ENCODE measurements at regions of chr17 and their contacts with region 1.

Region 1: DNA sequence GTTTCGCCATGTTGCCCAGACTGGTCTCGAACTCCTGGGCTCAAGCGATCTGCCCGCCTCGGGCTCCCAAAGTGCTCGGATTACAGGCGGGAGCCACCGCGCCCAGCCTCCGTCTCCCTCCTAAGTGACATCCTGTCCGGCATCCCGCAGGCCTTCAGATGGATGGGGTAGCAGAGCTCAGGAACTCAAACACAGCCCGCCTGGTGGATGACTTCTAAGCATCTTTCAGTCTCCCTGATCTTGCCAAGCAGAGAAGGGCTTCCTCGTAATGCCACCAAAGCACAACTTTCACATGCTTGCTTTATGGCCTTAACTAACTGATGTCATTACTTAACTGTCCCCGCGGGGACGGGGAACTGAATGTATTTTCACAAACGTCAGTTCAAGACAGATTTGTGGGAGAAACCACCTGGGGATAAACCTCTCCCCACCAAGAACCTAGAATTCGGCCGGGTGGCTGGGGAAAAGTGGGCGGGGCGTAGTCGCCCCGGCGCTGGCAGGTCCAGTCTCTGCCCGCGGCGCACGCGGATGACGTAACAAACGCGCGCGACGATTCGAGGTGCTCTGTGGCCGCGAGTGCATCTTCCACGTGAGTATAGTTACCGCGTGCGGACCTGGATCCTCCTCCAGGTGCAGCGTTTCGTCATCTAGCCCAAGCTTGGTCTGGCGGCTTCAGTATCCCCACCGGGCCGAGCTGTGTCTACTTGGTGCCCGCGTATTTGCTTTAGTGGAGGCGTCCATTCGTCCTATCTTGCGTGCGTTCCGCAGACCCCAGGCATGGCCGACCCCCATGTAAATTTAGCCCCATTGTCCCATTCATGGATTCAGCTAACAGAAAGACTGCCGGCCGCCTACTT is at the start of gene PFAS:
- DNase-seq: peak; percentile 97
- ATAC-seq: peak; percentile 71
- H3K4me3 Mint-ChIP-seq: peak within 1 kb of the TSS; percentile 96
- H3K27ac Mint-ChIP-seq: peak within 1 kb of the TSS; percentile 99
- H3K4me1 Mint-ChIP-seq: peaks cover 39% of the 10 kb centered on the region
- H3K27me3 Mint-ChIP-seq: no peaks in the 10 kb centered on the region
- total RNA-seq, gene PFAS: 78.3 to 80.2 TPM

Region 2: GRCh38 chr17:8138672-8139371 is 110.2 kb before region 1 on chr17:
- CTCF ChIA-PET with region 1: interaction called, 4 read pairs
- POLR2A ChIA-PET with region 1: interaction called, 16 read pairs
- DNase-seq: peak; percentile 98
- ATAC-seq: peak; percentile 93
- H3K4me3 Mint-ChIP-seq: no peak overlapping the region
- H3K27ac Mint-ChIP-seq: no peak overlapping the region
- H3K4me1 Mint-ChIP-seq: peaks cover 5% of the 10 kb centered on the region
- H3K27me3 Mint-ChIP-seq: peaks cover 4% of the 10 kb centered on the region

Region 3: DNA sequence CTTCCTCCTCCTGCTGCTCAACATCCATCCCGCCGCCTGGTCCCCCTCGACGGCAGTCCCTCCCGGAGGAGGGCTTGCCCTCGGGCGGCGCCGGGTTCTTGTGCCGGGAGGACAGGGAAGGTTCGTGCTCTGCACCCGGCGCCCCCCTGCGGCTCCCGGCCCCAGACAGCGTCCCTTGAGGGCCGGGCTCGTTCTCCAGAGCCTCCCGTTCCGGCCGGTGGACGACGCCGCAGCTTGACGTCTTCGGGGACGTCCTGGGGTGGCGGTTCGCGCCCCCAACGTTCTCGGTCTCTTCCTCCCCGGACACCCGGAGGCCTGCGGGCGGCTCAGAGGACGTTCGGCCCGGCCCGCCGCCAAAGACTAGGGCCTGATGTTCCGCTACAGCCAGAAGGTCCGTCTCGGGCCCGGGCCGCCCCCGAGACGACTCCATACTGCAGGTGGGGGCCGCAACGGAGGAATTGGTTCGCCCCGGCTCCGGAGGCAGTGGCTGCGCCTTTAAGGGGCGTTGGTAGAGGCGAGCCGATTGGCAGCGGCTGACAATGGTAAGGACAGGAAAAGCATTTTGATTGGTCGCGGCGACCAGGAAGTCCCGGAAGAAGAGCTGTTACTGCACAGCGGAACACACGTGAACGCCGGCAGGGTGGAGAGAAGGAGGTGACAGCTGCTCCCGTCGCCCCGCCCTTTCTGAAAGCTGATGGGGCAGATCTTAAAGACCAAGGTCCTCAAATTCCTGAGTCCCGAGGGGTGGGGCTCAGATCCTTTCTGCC is 59.1 kb before region 1 on chr17 and contains the start of gene BORCS6:
- CTCF ChIA-PET with region 1: interaction called, 11 read pairs
- POLR2A ChIA-PET with region 1: interaction called, 26 read pairs
- DNase-seq: peak; percentile 98
- ATAC-seq: peak; percentile 68
- H3K4me3 Mint-ChIP-seq: no peak within 1 kb of the TSS
- H3K27ac Mint-ChIP-seq: peak within 1 kb of the TSS; percentile 93
- H3K4me1 Mint-ChIP-seq: peaks cover 11% of the 10 kb centered on the region
- H3K27me3 Mint-ChIP-seq: no peaks in the 10 kb centered on the region
- total RNA-seq, gene BORCS6: 12.7 TPM

Region 4: DNA sequence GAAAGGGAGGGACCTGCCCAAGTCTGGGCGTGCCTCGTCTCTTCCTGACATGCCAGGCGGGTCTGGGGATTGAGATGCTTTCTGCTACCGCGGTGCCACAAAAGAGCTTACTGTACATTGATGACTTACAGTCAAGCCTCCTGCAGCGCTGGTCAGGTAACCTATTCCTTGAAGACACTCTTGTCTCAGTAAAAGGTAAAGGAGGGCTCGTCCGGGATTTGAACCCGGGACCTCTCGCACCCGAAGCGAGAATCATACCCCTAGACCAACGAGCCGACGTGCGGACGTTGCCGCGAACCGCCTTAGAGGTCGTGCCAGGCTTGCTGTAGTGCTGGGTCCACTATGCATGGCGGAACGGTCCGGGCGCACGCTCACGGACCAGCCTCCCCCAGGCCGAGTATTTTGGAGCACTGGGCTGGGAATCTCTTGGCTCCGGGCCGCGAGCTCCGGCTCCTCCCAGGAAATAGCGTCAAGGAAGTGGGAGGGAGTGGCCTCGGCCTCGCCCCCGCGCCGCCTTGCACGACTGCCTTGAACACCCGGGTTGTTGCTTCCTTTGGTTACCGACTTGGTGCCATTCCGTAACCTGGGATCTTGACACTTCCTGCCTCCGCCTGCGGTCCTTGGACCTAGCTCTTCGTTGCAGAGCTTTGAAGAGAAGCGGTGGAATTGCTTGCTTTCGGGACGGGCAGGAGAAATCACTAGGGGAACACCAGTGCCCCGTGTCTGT is 26.2 kb before region 1 on chr17:
- CTCF ChIA-PET with region 1: interaction called, 46 read pairs
- POLR2A ChIA-PET with region 1: interaction called, 185 read pairs
- DNase-seq: peak; percentile 92
- ATAC-seq: peak; percentile 49
- H3K4me3 Mint-ChIP-seq: peak overlapping the region; percentile 92
- H3K27ac Mint-ChIP-seq: peak overlapping the region; percentile 98
- H3K4me1 Mint-ChIP-seq: peaks cover 58% of the 10 kb centered on the region
- H3K27me3 Mint-ChIP-seq: peaks cover 2% of the 10 kb centered on the region

Region 5: GRCh38 chr17:8288336-8289102 is 39.5 kb after region 1 on chr17 and contains the start of gene RANGRF:
- CTCF ChIA-PET with region 1: interaction called, 4 read pairs
- POLR2A ChIA-PET with region 1: interaction called, 50 read pairs
- DNase-seq: peak; percentile 90
- ATAC-seq: peak; percentile 95
- H3K4me3 Mint-ChIP-seq: peak within 1 kb of the TSS; percentile 84
- H3K27ac Mint-ChIP-seq: peak within 1 kb of the TSS; percentile 86
- H3K4me1 Mint-ChIP-seq: peaks cover 47% of the 10 kb centered on the region
- H3K27me3 Mint-ChIP-seq: no peaks in the 10 kb centered on the region
- total RNA-seq, gene RANGRF: 49.8 to 55.6 TPM

Region 6: DNA sequence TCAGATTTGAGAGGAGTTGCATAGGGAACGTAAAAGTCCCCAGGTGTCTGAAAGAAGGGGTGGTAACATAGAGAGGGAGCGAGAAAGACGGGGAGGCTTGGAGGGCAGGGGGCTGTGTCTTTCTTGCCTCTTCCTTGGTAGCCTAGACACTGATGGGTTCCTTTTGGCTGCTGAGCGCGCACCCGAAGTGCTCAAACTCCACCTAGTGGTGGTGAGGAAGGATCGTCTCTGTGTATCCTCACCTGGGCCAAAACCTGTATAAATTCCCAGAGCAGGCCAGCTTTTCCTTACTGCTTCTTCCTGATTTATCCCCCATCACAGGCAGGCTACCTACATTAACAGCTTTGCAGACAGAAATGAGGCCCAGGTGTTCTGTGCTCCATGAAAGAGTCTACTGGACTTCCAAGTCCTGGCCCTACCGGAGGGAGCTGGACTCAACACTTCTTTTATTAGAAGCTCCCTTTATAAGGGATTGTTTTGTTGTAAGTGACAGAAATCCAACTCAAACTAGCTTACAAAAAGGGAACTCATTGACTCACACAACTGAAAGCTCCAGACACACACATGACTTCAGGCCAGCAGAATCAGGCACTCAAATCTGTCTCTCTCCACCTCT is 51.8 kb after region 1 on chr17:
- CTCF ChIA-PET with region 1: interaction called, 22 read pairs
- POLR2A ChIA-PET with region 1: interaction called, 50 read pairs
- DNase-seq: peak; percentile 74
- ATAC-seq: peak; percentile 93
- H3K4me3 Mint-ChIP-seq: no peak overlapping the region
- H3K27ac Mint-ChIP-seq: peak overlapping the region; percentile 37
- H3K4me1 Mint-ChIP-seq: peaks cover 18% of the 10 kb centered on the region
- H3K27me3 Mint-ChIP-seq: no peaks in the 10 kb centered on the region